Left cardiac atrium (tissue), 4 donors: ENCODE measurements at regions of chr2 and their contacts with region 1.

Region 1: DNA sequence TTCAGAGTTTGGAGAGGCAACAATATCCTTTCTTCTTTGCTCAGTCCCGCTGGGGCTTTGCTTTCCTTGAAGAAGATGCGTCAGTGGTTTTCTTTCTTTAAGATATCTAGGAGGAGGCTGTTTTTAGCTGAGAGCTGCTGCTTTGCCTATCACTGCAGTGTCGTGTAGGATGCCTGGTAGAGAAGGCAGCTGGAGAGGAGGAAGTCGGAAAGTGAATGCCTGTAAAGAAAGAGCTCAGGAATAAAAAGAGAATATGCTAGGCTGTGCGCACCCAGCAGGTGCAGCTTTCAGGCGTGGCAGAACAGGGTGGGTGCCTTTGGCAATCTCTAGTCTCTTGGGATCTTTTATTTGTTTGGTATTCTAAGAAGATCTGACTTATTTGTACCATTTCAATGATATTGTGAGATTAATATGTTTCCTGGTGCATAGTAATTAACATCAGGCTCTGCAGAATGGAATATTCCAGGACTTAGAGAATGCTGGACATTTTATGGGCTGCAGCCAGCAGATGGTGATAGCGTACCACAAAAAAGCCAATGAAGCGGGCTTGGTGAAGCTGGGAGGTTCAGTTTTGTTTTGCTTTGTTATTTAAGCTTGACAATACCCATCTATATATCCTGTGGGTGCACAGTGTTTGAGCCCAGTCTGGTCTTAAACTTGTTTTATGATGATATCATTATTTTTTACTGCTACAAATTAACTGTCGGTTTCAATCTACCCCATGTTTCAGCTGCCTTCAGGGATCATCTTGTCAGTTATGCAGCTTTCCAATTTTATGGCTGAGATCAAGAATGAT is 34.9 kb downstream of the CAVIN2 start:
- DNase-seq: peak; percentile 49
- ATAC-seq: peak; percentile 89

Region 2: DNA sequence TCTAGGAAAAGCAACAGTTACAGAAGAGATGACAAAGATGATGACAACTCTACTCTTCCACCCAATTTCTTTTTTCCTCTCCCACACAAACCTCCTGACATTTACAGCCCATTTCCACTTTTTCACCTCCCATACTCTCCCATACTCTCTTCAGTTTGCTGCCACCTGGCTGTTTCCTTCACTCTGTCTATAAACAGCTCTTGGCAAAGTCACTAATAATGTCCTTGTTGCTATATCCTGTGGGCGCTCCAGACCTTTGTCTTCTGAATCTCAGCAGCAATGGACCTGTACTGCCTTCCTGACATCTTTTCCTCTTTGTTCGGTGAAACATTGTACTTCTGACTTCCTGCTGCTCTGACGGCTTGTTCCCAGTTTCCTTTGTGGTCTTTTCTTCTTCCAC is 95.5 kb after region 1 on chr2:
- intact Hi-C with region 1: loop called in 1 of 2 experiments (anchors 10 kb)
- DNase-seq: no peak
- ATAC-seq: peak; percentile 67 to 74

Region 3: DNA sequence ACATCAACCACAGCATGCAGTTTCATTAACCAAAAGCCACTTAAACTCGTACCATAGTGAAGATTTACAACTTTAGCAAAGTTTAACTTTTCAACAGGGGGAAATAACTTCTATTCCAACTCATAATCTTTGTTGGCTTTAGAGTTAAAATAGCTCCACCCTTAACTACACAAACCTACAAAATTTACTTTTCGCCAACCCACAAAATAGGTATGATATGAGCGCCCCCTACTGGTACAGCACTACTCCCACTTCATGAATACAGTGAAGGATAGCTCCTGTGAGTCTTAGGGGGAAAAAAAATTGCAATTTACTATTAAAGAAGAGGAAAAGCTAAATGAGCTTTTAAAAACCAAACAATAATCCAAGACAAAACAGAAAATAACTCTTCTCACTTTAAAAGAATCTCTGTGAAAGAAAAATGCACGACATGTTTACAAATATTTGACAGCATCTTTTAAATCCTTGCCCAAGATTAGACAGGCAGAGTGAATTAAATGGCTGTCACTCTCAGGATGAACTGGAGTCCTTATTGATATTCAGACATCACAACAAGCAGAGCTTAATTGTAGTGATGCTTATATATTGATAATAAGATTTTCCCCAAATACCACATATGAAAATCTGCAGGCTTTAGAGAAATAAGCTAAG is 350.5 kb after region 1 on chr2:
- intact Hi-C with region 1: loop called (anchors 1 to 2 kb)
- DNase-seq: peak; percentile 56
- ATAC-seq: peak; percentile 87 to 92